Left cardiac atrium (tissue), 4 donors: ENCODE measurements at regions of chr11 and their contacts with region 1.

Region 1: GRCh38 chr11:59429924-59430516 is 3.8 kb upstream of the OR5A2 start:
- DNase-seq: no peak
- ATAC-seq: no peak

Region 2: DNA sequence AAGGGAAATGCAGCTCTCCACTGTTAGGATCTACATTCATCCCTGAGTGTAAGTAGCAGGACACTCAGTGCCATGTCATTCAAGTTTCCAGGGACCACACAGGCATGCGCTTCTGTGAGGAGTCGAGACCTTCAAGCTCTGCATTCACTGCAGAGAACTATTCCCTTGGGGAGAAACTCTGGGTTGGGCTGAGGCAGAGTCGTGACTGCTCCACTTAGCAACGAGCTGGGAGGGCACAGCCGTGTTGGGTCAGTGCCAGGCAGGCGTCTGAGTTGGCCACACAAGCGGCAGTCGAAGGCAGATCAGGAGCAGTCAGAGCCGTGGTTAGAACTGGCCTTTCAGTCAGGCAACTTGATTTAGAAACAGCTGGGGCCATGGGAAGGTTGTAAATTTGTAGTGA is 232.0 kb before region 1 on chr11:
- intact Hi-C with region 1: loop called in 1 of 2 experiments (anchors 10 kb)
- DNase-seq: peak; percentile 80
- ATAC-seq: peak; percentile 84 to 95